Right ventricle myocardium superior (tissue), 1 donor: ENCODE measurements at regions of chr7 and their contacts with region 1.

Region 1: GRCh38 chr7:112206238-112207044 is at the starts of genes DOCK4 and ZNF277:
- DNase-seq: peak; percentile 99
- ATAC-seq: peak; percentile 95
- total RNA-seq, gene DOCK4: 14.9 TPM
- total RNA-seq, gene ZNF277: 12.6 TPM

Region 2: GRCh38 chr7:112056409-112056808 is 150.0 kb before region 1 on chr7:
- intact Hi-C with region 1: loop called (anchors 10 kb)
- DNase-seq: no peak
- ATAC-seq: no peak

Region 3: GRCh38 chr7:112383671-112384417 is 177.4 kb after region 1 on chr7:
- intact Hi-C with region 1: loop called (anchors 10 kb)
- DNase-seq: no peak
- ATAC-seq: no peak